BJ (cell line): ENCODE measurements at regions of chr9 and their contacts with region 1.

Region 1: DNA sequence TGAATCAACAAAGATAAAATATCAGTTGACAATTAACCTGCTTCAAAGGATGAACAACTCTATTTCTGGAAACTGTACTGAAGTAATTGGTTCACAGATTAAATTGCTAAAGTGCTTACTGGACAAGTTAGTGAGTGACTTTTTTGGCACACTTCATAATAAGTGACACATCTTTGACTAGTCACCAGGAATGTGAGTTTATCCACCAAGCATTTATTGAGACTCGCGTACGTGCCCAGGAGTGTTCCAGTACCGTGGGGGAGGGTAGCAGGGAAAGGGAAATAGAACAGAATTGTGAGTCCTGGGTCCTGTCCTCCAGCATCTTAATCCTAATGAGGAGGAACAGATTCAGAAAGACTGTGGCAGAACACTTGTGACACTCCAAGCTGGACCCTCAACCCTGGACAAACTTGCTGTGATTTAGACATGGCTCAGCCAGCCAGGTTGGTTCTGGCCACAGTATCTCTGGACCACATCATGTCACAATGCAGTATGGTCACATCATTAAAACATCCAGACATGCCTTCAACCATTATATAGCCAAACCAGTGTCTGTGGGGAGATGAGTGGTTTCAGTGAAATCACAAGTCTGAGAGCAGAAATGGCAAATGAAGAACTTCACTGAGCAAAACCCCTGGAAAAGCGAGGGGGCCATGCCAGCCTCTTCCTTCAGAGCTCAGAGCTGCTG is 623.1 kb downstream of the BNC2 start:
- DNase-seq: peak; percentile 63
- H3K4me3 ChIP-seq: no peak overlapping the region
- H3K27me3 ChIP-seq: no peaks in the 10 kb centered on the region
- CTCF ChIP-seq: no peak

Region 2: DNA sequence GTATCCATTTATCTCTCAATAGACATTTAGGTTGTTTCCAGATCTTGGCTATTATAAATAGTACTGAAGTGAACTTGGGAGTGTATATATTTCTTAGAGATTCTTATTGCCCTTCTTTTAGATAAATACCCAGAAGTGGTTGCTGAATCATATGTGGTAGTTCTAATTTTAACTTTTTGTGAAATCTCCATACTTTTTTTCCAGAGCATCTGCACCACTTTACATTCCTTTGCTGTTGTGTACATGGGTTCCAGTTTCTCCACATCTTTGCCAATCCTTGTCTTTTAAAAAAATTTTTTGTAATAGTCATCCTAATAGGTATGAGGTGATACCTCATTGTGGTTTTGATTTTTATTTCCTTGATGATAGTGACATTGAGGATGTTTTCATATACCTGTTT is 390.7 kb before region 1 on chr9:
- CTCF ChIA-PET with region 1: no interaction called
- POLR2A ChIA-PET with region 1: no interaction called
- DNase-seq: no peak
- H3K4me3 ChIP-seq: no peak overlapping the region
- H3K27me3 ChIP-seq: no peaks in the 10 kb centered on the region
- CTCF ChIP-seq: no peak

Region 3: DNA sequence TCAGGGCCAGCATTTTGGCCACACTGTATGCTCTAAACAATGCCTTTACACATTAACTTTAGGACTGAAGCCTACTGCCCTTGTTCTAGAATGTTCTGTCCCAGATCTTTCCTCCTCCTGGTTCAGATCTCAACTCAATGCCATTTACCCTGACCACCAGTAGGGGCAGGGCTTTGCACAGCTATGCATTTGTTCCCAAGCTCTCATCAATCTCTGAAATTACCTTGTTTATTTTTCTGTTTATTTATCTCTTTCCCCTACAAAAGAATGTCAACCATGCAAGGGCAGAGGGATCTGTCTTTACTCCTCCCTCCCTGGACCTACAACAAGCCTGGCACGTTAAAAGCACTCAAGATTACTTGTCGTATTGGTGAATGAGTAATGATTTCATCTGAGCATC is 10.3 kb after region 1 on chr9:
- CTCF ChIA-PET with region 1: interaction called, 15 read pairs
- POLR2A ChIA-PET with region 1: no interaction called
- DNase-seq: no peak
- H3K4me3 ChIP-seq: no peak overlapping the region
- H3K27me3 ChIP-seq: no peaks in the 10 kb centered on the region; the same call in 1 of the 2 replicates
- CTCF ChIP-seq: peak; percentile 64